ENCODE measurements at regions of chr5 and their contacts with region 1.

Region 1: GRCh38 chr5:169980418-169981053 is at the start of gene INSYN2B:
- DNase-seq: peak; percentile 73 to 75
- H3K4me3 ChIP-seq: no peak within 1 kb of the TSS
- H3K27ac ChIP-seq: no peak within 1 kb of the TSS
- H3K4me1 ChIP-seq: peaks cover 0 to 10% of the 10 kb centered on the region in 2 donors
- H3K27me3 ChIP-seq: no peaks in the 10 kb centered on the region
- CTCF ChIP-seq: peak; percentile 23 to 86 (median 63)
- POLR2A ChIP-seq: no peak
- total RNA-seq, gene INSYN2B: not detected

Region 2: GRCh38 chr5:169701910-169702451 is 278.6 kb before region 1 on chr5:
- intact Hi-C with region 1: loop called (anchors 5 kb)
- DNase-seq: no peak
- H3K4me3 ChIP-seq: no peak overlapping the region
- H3K27ac ChIP-seq: no peak overlapping the region
- H3K4me1 ChIP-seq: peaks cover 8 to 29% of the 10 kb centered on the region in 2 donors
- H3K27me3 ChIP-seq: no peaks in the 10 kb centered on the region
- CTCF ChIP-seq: peak in 4 of 6 experiments; percentile 40 to 71 (median 61)
- POLR2A ChIP-seq: no peak

Region 3: DNA sequence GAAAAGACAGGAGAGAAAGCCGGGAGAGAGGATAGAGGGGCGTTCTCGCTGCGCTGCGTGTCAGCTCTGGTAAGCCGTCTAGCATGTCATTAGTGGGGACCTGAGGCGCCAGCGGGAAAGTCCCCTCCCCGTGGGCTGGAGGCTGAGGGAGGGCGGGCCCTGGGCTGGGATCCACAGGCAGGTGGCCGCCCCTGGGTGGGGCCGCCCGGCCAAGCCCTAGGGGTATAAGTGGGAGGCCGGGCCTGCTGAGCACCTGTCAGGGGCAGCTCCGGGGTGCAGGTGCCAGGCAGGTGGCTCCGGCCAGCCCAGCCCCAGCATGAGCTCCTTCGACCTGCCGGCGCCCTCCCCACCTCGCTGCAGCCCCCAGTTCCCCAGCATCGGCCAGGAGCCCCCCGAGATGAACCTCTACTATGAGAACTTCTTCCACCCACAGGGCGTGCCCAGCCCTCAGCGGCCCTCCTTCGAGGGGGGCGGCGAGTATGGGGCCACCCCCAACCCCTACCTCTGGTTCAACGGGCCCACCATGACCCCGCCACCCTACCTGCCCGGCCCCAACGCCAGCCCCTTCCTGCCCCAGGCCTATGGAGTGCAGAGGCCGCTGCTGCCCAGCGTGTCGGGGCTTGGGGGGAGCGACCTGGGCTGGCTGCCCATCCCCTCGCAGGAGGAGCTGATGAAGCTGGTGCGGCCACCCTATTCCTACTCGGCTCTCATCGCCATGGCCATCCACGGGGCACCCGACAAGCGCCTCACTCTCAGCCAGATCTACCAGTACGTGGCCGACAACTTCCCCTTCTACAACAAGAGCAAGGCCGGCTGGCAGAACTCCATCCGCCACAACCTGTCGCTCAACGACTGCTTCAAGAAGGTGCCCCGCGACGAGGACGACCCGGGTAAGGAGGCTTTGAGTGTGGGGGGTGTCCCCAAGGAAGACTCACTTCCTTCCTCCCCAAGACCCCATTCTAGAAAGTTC is 125.4 kb after region 1 on chr5 and contains the start of gene FOXI1:
- intact Hi-C with region 1: no loop called
- DNase-seq: peak in 1 of 2 donors; percentile 17
- H3K4me3 ChIP-seq: no peak within 1 kb of the TSS
- H3K27ac ChIP-seq: no peak within 1 kb of the TSS
- H3K4me1 ChIP-seq: no peaks in the 10 kb centered on the region
- H3K27me3 ChIP-seq: no peaks in the 10 kb centered on the region
- CTCF ChIP-seq: no peak
- POLR2A ChIP-seq: no peak
- total RNA-seq, gene FOXI1: not detected